ENCODE measurements at regions of chr14 and their contacts with region 1.

Region 1: DNA sequence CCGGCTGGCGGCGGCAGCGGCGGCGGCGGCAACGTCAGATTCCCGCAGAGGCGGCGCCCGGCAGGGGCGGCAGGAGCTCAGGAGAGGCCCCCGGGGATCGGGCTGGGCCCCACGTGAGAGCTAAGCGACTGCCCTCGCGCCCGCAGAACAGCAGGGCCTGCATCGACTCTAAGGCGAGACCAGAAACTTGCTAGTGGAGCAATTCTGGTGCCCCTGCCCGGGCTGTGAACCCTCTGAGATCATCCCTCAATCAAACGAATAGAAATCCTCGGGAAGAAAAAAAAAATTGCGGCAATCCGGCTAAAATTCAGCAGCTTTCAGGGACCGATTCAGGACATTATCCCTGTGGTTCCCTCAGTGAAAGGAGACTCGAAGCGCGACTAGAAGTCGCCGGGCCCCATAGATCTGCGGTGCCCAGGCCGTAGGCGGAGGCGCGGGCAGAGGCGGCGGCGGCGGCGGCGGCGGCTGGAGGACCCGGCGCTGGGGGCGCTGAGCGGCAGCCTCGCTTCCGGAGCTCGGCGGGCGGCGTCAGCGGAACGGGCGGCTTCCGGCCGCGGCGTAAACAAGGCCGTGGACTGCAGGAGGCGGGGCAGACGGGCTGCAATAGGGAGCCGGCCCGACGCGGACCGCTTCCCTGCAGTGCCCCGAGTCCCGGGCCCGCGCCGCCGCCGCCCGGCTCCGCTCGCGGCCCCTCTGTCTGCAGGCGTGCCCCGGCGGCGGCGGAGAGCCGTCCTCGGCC is at the start of gene KLHDC2:
- DNase-seq: peak; percentile 92
- ATAC-seq: peak; percentile 88
- H3K4me3 Mint-ChIP-seq: peak within 1 kb of the TSS; percentile 98
- H3K27ac Mint-ChIP-seq: peak within 1 kb of the TSS; percentile 99
- H3K4me1 Mint-ChIP-seq: peaks cover 26% of the 10 kb centered on the region
- H3K27me3 Mint-ChIP-seq: no peaks in the 10 kb centered on the region
- total RNA-seq, gene KLHDC2: 24.9 to 25.5 TPM

Region 2: GRCh38 chr14:49598485-49599300 is 169.0 kb before region 1 on chr14 and contains the start of gene LRR1:
- CTCF ChIA-PET with region 1: no interaction called
- POLR2A ChIA-PET with region 1: interaction called, 10 read pairs
- DNase-seq: peak; percentile 90
- ATAC-seq: peak; percentile 86
- H3K4me3 Mint-ChIP-seq: peak within 1 kb of the TSS; percentile 99
- H3K27ac Mint-ChIP-seq: peak within 1 kb of the TSS; percentile 99
- H3K4me1 Mint-ChIP-seq: peaks cover 37% of the 10 kb centered on the region
- H3K27me3 Mint-ChIP-seq: no peaks in the 10 kb centered on the region
- total RNA-seq, gene LRR1: 63.1 to 65.0 TPM

Region 3: GRCh38 chr14:49620182-49621113 is 147.3 kb before region 1 on chr14 and contains the starts of genes MGAT2 and RPL36AL:
- CTCF ChIA-PET with region 1: interaction called, 4 read pairs
- POLR2A ChIA-PET with region 1: interaction called, 29 read pairs
- DNase-seq: peak; percentile 97
- ATAC-seq: peak; percentile 91
- H3K4me3 Mint-ChIP-seq: peak within 1 kb of the TSS; percentile 93
- H3K27ac Mint-ChIP-seq: peak within 1 kb of the TSS; percentile 96
- H3K4me1 Mint-ChIP-seq: peaks cover 58% of the 10 kb centered on the region
- H3K27me3 Mint-ChIP-seq: no peaks in the 10 kb centered on the region
- total RNA-seq, gene MGAT2: 55.1 to 57.4 TPM
- total RNA-seq, gene RPL36AL: 229 to 241 TPM

Region 4: DNA sequence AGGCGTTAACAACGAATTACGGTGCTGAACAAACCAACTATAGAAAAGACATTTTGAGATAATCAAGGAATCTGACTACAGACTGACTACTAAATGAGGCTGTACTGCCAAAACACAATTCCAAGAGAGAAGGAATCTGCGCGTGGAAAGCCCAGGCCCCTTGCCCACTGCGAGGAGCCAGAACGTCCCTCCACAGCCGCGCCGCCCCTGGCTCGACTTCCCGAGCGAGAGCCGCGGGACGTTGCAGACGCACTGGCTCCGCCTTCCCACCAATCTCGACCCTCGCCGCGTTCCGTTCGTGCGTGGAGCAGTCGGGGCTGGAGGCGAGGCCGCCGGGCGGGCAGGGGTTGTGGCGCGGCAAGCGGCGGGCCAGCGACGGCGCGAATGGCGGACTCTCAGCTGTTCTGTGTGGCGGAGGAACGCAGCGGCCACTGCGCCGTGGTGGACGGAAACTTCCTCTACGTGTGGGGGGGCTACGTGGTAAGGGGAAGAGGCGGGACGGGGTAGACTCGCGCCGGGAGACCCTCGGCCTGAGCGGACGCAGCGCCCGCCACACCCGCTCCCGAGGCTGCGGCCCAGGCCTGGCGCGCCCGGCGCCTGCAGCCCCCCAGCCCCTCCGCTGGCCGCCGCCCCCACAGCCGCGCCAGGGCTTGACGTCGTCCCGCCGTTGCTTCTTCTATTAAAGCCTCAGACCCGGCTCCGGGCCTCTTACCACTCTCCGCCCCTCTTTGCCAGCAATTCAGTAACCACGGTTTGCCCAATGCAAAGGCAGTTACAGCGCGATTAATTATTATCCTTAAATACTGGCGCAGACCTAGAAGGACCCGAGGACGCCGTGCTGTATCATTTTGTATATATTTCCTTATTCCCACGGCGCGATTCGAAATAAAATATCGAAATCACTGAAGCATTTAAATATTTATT is 74.7 kb before region 1 on chr14 and contains the start of gene KLHDC1:
- CTCF ChIA-PET with region 1: interaction called, 11 read pairs
- POLR2A ChIA-PET with region 1: interaction called, 16 read pairs
- DNase-seq: peak; percentile 81
- ATAC-seq: peak; percentile 75
- H3K4me3 Mint-ChIP-seq: peak within 1 kb of the TSS; percentile 76
- H3K27ac Mint-ChIP-seq: peak within 1 kb of the TSS; percentile 78
- H3K4me1 Mint-ChIP-seq: peaks cover 30% of the 10 kb centered on the region
- H3K27me3 Mint-ChIP-seq: no peaks in the 10 kb centered on the region
- total RNA-seq, gene KLHDC1: 0.95 to 1.5 TPM